PC-9 (cell line): ENCODE measurements at regions of chr2 and their contacts with region 1.

Region 1: GRCh38 chr2:230987137-230988020 is 8.5 kb upstream of the SPATA3 start:
- DNase-seq: peak in 1 of 2 experiments; percentile 82
- H3K4me3 ChIP-seq: peak overlapping the region; percentile 64
- H3K27ac ChIP-seq: no peak overlapping the region
- H3K4me1 ChIP-seq: peaks cover 3% of the 10 kb centered on the region; the same call in 1 of the 2 replicates
- H3K27me3 ChIP-seq: peaks cover 6% of the 10 kb centered on the region
- CTCF ChIP-seq: peak; percentile 91

Region 2: GRCh38 chr2:230738391-230738811 is 249.0 kb before region 1 on chr2:
- CTCF ChIA-PET with region 1: no interaction called
- POLR2A ChIA-PET with region 1: no interaction called
- intact Hi-C with region 1: no loop called
- DNase-seq: no peak
- H3K4me3 ChIP-seq: peak overlapping the region; percentile 22; the same call in 1 of the 2 replicates
- H3K27ac ChIP-seq: peak overlapping the region; percentile 94
- H3K4me1 ChIP-seq: peaks cover 56% of the 10 kb centered on the region
- H3K27me3 ChIP-seq: no peaks in the 10 kb centered on the region
- CTCF ChIP-seq: no peak

Region 3: DNA sequence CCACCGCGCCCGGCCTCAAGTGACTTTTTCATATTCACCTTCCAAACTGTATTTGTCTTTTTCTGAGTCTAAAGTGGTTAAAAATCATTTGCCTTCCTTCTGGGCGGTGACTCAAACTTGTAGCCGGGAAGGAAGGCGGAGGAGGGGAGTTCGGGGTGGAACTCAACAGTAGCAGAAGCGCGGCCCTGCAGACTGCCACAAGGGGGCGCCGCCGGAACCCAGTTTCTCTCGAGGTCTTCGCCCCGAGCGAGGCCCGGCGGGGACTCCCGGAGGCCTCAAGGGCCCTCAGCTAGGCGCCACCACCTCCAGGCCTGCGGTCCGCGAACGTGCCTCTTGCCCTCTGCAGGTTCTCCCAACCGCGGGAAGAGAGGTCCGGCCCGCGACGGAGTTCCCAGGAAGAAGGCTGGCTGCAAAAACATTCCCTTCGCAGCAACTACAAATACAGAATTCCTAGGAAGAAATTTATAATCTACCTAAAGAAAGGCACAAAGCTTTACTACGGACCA is 139.4 kb before region 1 on chr2:
- CTCF ChIA-PET with region 1: no interaction called
- POLR2A ChIA-PET with region 1: no interaction called
- intact Hi-C with region 1: loop called (anchors 2 kb)
- DNase-seq: peak; percentile 60 to 80
- H3K4me3 ChIP-seq: peak overlapping the region; percentile 3; the same call in 1 of the 2 replicates
- H3K27ac ChIP-seq: no peak overlapping the region
- H3K4me1 ChIP-seq: no peaks in the 10 kb centered on the region
- H3K27me3 ChIP-seq: peaks cover 13% of the 10 kb centered on the region; the same call in 1 of the 2 replicates
- CTCF ChIP-seq: peak; percentile 81

Region 4: DNA sequence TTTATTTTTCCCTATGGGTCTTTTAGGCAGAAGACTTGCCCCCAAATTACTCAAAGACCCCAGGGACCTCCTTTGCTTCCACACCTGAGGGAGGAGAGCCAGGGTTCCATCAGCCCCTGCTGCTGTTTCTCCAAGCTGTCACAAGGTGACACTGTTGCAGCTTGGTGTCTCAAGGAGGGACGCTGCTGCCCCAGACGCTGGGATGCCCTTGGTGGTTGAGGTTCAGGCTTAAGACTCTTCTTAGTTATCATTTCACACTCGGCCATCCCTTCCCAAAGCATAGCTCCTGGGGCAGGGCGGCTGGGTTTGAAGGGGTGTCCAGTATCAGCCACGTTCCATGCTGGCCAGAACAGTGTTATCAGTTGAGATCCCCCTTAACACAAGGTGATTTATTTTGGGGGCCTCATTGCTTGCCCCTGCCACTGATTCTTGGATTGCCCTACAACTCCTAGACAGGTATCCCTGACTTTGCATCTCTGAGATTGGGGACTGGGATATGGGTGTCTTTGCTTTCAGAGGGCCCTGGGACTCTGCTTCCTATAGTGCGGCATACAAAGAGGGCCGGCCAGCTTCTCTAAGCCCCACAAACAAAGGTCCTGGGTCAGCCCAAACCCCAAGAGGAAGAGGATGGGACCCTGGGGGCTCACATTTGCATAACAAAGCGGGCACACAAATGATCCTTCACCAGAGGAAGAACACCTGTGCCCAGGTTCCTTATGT is 85.0 kb before region 1 on chr2:
- CTCF ChIA-PET with region 1: no interaction called
- POLR2A ChIA-PET with region 1: no interaction called
- intact Hi-C with region 1: loop called (anchors 1 kb)
- DNase-seq: peak in 1 of 2 experiments; percentile 43
- H3K4me3 ChIP-seq: no peak overlapping the region
- H3K27ac ChIP-seq: no peak overlapping the region
- H3K4me1 ChIP-seq: no peaks in the 10 kb centered on the region
- H3K27me3 ChIP-seq: peaks cover 35% of the 10 kb centered on the region
- CTCF ChIP-seq: peak; percentile 84